WTC11 (cell line): ENCODE measurements at regions of chr4 and their contacts with region 1.

Region 1: DNA sequence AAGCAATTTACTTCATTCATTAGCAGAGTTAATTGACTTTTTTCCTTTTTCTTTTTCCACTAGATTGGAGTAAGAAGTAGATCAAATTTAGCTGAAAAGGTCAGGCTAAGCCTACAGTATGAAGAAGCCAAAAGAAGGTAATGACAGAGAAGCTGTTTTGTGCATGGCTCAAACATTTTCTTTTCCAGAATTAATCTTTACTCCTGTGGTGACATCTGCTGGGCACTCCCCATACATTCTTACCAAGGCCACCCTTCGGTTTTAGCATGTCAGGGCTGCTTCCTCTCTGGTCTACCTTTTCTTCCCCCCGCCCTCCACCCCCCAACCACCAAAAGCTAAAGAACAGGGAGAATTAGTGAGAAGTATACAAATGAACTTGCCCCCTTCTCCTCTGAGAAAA is 70.2 kb downstream of the CLDN22 start:
- DNase-seq: no peak
- ATAC-seq: peak; percentile 78
- H3K4me3 Mint-ChIP-seq: no peak overlapping the region
- H3K27ac Mint-ChIP-seq: peak overlapping the region; percentile 51
- H3K4me1 Mint-ChIP-seq: peaks cover 3% of the 10 kb centered on the region
- H3K27me3 Mint-ChIP-seq: no peaks in the 10 kb centered on the region
- CTCF ChIP-seq: no peak

Region 2: DNA sequence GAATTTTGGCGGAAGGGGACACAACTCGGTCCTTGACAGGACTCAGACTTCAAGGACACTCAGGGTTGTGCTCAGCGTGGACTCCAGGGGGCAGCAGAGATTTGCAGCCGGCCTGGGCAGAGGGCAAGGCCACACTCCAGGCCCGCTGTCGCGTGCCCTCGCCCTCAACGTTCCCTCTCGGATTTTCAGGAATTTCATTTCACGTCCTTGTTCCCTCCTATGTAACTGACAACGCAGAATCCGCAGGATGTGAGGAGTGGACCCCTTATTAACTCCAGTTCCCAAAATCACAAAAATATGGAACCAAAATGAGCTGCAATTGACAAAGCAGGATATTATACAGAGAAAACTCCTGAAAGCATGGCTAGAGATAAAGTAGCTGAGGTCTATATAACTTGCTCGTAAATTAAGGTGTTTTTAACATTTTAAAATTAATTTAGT is 311.6 kb before region 1 on chr4:
- CTCF ChIA-PET with region 1: interaction called, 25 read pairs
- POLR2A ChIA-PET with region 1: no interaction called
- DNase-seq: peak; percentile 86
- ATAC-seq: peak; percentile 100
- H3K4me3 Mint-ChIP-seq: no peak overlapping the region
- H3K27ac Mint-ChIP-seq: no peak overlapping the region
- H3K4me1 Mint-ChIP-seq: peaks cover 16% of the 10 kb centered on the region
- H3K27me3 Mint-ChIP-seq: peaks cover 6% of the 10 kb centered on the region; the same call in 1 of the 2 replicates
- CTCF ChIP-seq: peak; percentile 86

Region 3: GRCh38 chr4:183223053-183223452 is 26.8 kb before region 1 on chr4:
- CTCF ChIA-PET with region 1: no interaction called
- POLR2A ChIA-PET with region 1: no interaction called
- DNase-seq: no peak
- ATAC-seq: no peak
- H3K4me3 Mint-ChIP-seq: no peak overlapping the region
- H3K27ac Mint-ChIP-seq: no peak overlapping the region
- H3K4me1 Mint-ChIP-seq: peaks cover 23% of the 10 kb centered on the region
- H3K27me3 Mint-ChIP-seq: no peaks in the 10 kb centered on the region
- CTCF ChIP-seq: no peak